ENCODE measurements at regions of chr11 and their contacts with region 1.

Region 1: DNA sequence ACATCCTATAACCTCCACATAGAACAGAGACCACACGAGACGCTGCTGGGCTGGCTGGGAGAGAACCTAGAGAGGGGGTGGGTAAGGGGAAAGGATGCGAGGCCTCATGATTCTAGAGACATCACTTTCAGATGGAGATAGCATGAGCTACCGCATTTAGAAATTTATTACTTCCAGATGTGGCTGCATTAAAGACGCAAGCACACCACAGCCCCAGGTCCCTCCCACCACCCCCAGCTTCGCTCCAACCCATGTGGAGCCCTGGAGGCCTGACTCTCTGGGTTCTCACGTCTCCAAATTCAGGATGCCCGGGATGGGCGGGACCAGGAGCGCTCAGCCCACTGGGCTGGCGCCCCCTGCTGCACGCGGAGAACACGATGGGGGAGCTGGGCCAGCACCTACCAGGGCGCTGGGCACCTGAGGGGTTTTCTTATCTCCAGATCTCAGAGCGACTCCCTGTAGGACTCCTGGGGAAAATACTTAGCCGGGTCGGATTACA is 13.6 kb downstream of the MRPL21 start:
- DNase-seq: no peak
- H3K4me3 ChIP-seq: no peak overlapping the region
- H3K27ac ChIP-seq: no peak overlapping the region
- H3K4me1 ChIP-seq: peaks cover 15% of the 10 kb centered on the region
- H3K27me3 ChIP-seq: no peaks in the 10 kb centered on the region
- CTCF ChIP-seq: peak; percentile 26 to 43
- POLR2A ChIP-seq: peak; percentile 19

Region 2: DNA sequence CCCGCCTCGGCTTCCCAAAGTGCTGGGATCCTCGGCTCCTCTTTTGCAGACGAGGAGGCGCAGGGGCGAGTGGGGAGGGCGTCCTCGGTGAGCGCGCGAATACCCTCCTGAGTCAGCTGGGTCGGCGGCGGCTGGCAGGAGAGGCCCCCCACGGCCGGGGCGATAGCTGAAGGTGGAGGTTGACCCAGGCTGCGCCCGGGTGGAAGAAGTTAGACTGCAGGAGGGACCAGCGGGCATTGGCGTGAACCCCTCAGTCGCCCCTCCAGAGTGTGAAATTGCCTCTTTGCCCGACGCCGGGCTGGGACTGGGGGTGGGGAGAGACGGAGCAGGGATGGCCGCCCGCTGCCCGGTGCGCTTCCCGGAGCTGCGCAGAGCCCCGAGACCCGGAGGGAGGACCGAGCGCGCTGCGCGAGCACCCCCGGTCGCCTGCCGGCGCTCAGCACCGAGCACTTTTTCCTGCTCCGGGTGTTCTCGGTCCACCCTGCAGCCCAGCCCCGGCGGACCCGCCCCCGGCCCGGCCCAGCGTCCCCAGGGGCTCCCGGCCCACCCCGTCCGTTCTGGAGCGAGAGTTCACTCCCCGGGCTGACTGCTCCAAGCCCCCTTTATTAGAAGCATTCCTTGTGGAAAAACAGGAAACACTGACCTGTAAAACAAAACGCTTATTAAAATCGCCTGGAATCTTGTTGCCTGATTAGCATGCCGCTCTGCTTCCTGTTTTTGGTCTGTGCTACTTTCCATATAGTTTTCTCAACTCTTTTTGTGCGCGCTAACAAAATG is 34.6 kb before region 1 on chr11:
- CTCF ChIA-PET with region 1: interaction called, 6 read pairs
- POLR2A ChIA-PET with region 1: no interaction called
- dilution Hi-C with region 1: no loop called
- intact Hi-C with region 1: loop called (anchors 5 kb)
- DNase-seq: peak; percentile 88
- H3K4me3 ChIP-seq: peak overlapping the region; percentile 37 to 63 (median 49)
- H3K27ac ChIP-seq: peak overlapping the region; percentile 17
- H3K4me1 ChIP-seq: peaks cover 12% of the 10 kb centered on the region
- H3K27me3 ChIP-seq: peaks cover 12 to 14% of the 10 kb centered on the region in 2 experiments
- CTCF ChIP-seq: no peak
- POLR2A ChIP-seq: no peak